Activated CD8-positive, alpha-beta T cell treated with anti-CD3 and anti-CD28 coated beads for 36 hours (primary cell): ENCODE measurements at regions of chr7 and their contacts with region 1.

Region 1: DNA sequence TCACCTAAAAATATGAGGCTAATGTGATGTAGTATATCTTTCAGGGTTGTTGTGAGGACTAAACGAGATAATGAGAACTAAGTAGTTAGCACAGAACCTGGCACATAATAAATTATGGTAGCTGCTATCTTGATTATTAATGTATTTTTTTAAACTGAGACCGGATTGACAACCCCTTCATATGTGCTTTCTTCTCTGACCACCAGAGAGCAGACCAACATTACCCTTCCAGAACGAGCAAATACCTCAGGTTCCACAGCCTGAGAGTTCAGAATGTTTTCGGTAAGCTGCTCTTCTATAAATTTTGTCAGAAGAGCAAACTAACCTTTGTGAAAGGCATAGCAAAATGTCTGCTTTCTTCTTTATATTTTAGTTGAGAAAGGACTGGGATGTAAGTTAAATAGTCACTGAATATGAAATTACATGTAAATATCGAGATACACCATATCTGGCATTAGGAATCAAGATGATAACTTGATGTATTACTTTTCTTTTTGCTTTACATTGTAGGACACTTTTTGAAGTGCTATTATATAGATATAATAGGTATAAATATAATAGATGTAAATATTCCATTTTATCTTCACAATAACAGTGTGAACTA is 13.6 kb upstream of the BPGM start:
- DNase-seq: peak; percentile 54
- ATAC-seq: peak; percentile 78
- H3K4me3 Mint-ChIP-seq: no peak overlapping the region
- H3K27ac Mint-ChIP-seq: no peak overlapping the region
- H3K4me1 Mint-ChIP-seq: peaks cover 29% of the 10 kb centered on the region
- H3K27me3 Mint-ChIP-seq: peaks cover 14% of the 10 kb centered on the region
- CTCF ChIP-seq: peak; percentile 73

Region 2: GRCh38 chr7:134574322-134574721 is 58.7 kb before region 1 on chr7:
- CTCF ChIA-PET with region 1: no interaction called
- POLR2A ChIA-PET with region 1: no interaction called
- intact Hi-C with region 1: no loop called
- DNase-seq: no peak
- ATAC-seq: no peak
- H3K4me3 Mint-ChIP-seq: no peak overlapping the region
- H3K27ac Mint-ChIP-seq: no peak overlapping the region
- H3K4me1 Mint-ChIP-seq: no peaks in the 10 kb centered on the region
- H3K27me3 Mint-ChIP-seq: peaks cover 5% of the 10 kb centered on the region
- CTCF ChIP-seq: no peak

Region 3: GRCh38 chr7:134646425-134647305 is 13.6 kb after region 1 on chr7 and contains the start of gene BPGM:
- CTCF ChIA-PET with region 1: interaction called, 65 read pairs
- POLR2A ChIA-PET with region 1: interaction called, 11 read pairs
- intact Hi-C with region 1: no loop called
- DNase-seq: peak; percentile 97
- ATAC-seq: peak; percentile 98
- H3K4me3 Mint-ChIP-seq: no peak within 1 kb of the TSS
- H3K27ac Mint-ChIP-seq: peak within 1 kb of the TSS; percentile 17
- H3K4me1 Mint-ChIP-seq: peaks cover 40% of the 10 kb centered on the region
- H3K27me3 Mint-ChIP-seq: no peaks in the 10 kb centered on the region
- CTCF ChIP-seq: no peak
- total RNA-seq, gene BPGM: 11.2 to 12.4 TPM

Region 4: GRCh38 chr7:134690016-134690415 is 57.0 kb after region 1 on chr7:
- CTCF ChIA-PET with region 1: interaction called, 23 read pairs
- POLR2A ChIA-PET with region 1: interaction called, 5 read pairs
- intact Hi-C with region 1: no loop called
- DNase-seq: no peak
- ATAC-seq: no peak
- H3K4me3 Mint-ChIP-seq: no peak overlapping the region
- H3K27ac Mint-ChIP-seq: no peak overlapping the region
- H3K4me1 Mint-ChIP-seq: peaks cover 12% of the 10 kb centered on the region
- H3K27me3 Mint-ChIP-seq: peaks cover 5% of the 10 kb centered on the region
- CTCF ChIP-seq: peak; percentile 22

Region 5: DNA sequence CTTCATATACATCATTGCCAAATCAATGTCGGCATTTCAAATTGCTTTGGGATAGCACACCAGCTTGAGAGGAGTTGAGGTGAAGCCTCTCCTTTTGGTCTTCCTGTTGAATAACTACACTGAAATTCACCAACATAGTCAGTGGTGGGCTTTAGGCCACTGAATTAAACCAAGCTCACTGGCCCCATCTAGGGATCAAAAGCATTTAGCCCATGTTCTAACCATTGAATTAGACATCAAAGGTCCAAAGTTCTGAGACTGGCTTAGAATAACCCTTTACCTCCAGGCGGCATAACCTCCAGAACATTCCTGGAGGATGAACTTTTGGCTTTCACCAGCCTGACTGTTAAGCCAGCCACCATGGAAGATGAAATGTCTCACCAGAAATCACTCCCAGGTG is 68.2 kb after region 1 on chr7:
- CTCF ChIA-PET with region 1: interaction called, 109 read pairs
- POLR2A ChIA-PET with region 1: no interaction called
- intact Hi-C with region 1: loop called (anchors 2 kb)
- DNase-seq: peak; percentile 51
- ATAC-seq: peak; percentile 67
- H3K4me3 Mint-ChIP-seq: no peak overlapping the region
- H3K27ac Mint-ChIP-seq: no peak overlapping the region
- H3K4me1 Mint-ChIP-seq: no peaks in the 10 kb centered on the region
- H3K27me3 Mint-ChIP-seq: no peaks in the 10 kb centered on the region
- CTCF ChIP-seq: peak; percentile 51

Region 6: GRCh38 chr7:134755401-134756022 is 122.5 kb after region 1 on chr7:
- CTCF ChIA-PET with region 1: interaction called, 53 read pairs
- POLR2A ChIA-PET with region 1: no interaction called
- intact Hi-C with region 1: loop called (anchors 5 kb)
- DNase-seq: peak; percentile 72
- ATAC-seq: no peak
- H3K4me3 Mint-ChIP-seq: no peak overlapping the region
- H3K27ac Mint-ChIP-seq: no peak overlapping the region
- H3K4me1 Mint-ChIP-seq: no peaks in the 10 kb centered on the region
- H3K27me3 Mint-ChIP-seq: no peaks in the 10 kb centered on the region
- CTCF ChIP-seq: peak; percentile 67

Region 7: DNA sequence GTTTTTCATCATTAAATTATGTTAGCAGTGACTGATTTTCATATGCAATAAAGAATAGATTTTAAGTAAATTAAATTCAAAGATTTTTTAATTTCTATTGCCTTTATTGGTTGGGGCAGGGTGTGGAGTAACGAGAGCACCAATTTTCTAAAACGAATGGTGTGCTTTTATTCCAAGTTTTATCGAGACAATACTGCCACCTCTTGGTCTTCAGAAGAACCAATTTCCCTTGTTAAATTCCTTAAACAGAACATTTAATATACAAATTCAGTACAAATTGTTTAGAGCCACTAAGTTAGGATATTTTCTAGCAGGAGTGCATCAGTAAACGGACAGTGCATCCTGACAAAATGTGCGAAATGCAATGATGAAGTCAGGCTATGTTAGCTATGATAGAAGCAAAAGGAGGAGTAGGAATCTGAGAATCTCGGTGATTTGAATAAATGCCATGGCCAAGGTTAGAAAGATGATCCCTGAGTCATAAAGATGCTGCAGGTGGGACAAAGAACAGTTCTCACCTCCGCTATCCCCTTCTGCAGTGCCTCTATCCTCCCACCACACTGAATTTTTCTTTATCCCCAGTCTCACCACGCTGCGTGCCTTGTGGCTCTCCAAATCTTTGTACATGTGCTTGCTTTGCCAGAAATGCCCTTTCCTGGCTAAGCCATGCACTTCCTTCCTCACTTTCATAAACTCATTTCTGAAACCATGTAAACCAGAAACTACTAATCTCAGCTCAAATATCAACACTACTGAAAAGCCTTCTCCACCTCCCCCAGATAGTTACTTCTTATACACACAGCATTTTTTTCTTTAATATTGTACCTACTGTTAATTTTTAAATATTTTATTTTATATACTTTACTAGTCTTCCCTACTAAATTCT is 321.4 kb after region 1 on chr7:
- CTCF ChIA-PET with region 1: interaction called, 40 read pairs
- POLR2A ChIA-PET with region 1: no interaction called
- intact Hi-C with region 1: loop called (anchors 5 kb)
- DNase-seq: no peak
- ATAC-seq: no peak
- H3K4me3 Mint-ChIP-seq: no peak overlapping the region
- H3K27ac Mint-ChIP-seq: no peak overlapping the region
- H3K4me1 Mint-ChIP-seq: no peaks in the 10 kb centered on the region
- H3K27me3 Mint-ChIP-seq: no peaks in the 10 kb centered on the region
- CTCF ChIP-seq: peak; percentile 77